ENCODE measurements at regions of chr2 and their contacts with region 1.

Region 1: GRCh38 chr2:106159866-106160785 is 34.0 kb downstream of the UXS1 start:
- DNase-seq: no peak
- H3K4me3 ChIP-seq: peak overlapping the region in 1 of 2 donors; percentile 6
- H3K27ac ChIP-seq: no peak overlapping the region
- H3K4me1 ChIP-seq: no peaks in the 10 kb centered on the region
- H3K27me3 ChIP-seq: no peaks in the 10 kb centered on the region
- CTCF ChIP-seq: no peak

Region 2: GRCh38 chr2:105802587-105802986 is 357.5 kb before region 1 on chr2:
- intact Hi-C with region 1: no loop called
- DNase-seq: no peak
- H3K4me3 ChIP-seq: no peak overlapping the region
- H3K27ac ChIP-seq: no peak overlapping the region
- H3K4me1 ChIP-seq: peaks cover 10 to 27% of the 10 kb centered on the region in 2 donors
- H3K27me3 ChIP-seq: no peaks in the 10 kb centered on the region
- CTCF ChIP-seq: no peak

Region 3: DNA sequence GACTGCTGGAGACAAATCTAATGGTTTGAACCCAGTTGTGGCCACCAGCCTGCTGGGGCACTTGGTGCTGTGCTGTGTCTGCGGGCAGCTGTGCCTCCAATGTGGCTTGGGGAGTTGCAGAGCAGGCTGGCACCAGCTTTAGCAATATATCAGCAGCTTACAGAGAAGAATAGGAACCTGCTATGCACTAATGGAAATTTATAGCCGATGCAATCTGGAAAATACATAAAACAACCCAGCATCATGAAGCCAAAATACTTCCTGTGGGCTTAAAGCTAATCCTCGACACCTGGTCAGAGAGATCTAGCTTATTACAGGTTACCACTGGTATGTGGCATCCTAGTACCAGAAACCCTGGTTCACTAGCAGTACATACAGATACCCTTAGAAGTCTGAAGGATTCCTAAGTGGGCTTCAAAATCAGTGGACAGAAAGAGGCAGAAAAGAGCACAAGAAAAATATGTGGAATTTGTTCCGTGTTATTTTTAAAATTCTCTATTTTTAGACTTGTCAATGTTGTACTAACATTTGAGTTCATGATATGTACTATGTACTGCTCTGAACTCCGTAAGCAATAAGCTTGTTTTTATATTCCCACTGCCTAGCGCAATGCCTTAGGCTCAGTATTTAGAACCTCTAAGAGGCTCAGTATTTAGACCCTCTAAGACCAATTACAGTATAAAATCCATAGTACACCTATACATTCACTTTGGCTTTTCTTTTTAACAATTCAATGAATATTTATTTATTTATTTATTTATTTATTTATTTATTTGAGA is 160.7 kb before region 1 on chr2:
- intact Hi-C with region 1: no loop called
- DNase-seq: no peak
- H3K4me3 ChIP-seq: no peak overlapping the region
- H3K27ac ChIP-seq: no peak overlapping the region
- H3K4me1 ChIP-seq: no peaks in the 10 kb centered on the region
- H3K27me3 ChIP-seq: no peaks in the 10 kb centered on the region
- CTCF ChIP-seq: no peak

Region 4: DNA sequence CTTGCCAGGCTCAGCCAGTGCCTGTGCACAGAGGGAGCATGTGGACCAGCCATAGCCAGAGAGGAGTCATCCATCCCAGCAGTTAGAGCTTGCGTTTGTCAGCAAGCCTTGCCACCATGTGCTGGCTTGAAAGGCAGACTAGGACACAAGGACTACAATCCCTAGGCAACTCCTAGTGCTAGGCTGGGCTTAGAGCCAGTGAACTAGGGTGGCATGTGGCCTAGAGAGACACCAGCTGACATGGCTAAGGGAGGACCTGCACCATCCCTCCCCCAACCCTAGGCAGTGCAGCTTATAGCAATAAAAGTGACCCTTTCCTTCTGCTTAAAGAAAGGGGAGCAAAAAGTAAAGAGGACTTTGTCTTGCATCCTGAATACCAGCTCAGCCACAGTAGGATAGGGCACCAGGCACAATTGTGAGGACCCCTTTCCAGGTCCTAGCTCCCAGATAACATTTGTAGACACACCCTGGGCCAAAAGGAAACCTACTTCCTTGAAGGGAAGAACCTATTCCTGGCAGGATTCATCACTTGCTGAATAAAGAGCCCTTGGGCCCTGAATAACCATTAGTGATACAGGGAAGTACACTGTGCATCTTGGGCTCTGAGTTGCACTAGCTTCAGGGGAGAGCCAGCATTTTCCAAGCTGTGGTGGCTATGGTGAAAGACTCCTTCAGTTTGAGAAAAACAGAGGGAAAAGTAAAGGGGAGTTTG is 72.7 kb after region 1 on chr2:
- intact Hi-C with region 1: loop called (anchors 5 kb)
- DNase-seq: no peak
- H3K4me3 ChIP-seq: no peak overlapping the region
- H3K27ac ChIP-seq: no peak overlapping the region
- H3K4me1 ChIP-seq: no peaks in the 10 kb centered on the region
- H3K27me3 ChIP-seq: no peaks in the 10 kb centered on the region
- CTCF ChIP-seq: no peak

Region 5: DNA sequence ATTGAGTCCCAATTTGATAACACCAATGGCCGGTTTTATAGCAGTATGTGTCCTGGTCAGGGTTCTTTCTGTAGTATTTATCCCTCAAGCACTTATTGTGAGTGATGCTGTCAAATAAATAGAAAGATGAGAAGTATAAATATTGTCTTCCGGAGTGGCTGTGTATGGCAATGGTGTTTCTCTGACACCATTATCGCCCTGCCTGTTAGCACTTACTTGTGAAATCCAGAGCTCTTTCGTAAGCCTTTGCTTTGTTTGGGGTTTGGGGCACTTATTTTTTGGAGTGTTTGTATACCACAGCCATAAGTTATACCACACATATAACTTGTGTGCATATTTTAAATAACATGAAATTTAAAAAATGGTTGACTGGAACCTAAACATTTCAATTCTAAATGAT is 356.3 kb after region 1 on chr2:
- intact Hi-C with region 1: no loop called
- DNase-seq: no peak
- H3K4me3 ChIP-seq: no peak overlapping the region
- H3K27ac ChIP-seq: no peak overlapping the region
- H3K4me1 ChIP-seq: no peaks in the 10 kb centered on the region
- H3K27me3 ChIP-seq: no peaks in the 10 kb centered on the region
- CTCF ChIP-seq: no peak